ENCODE measurements at regions of chr13 and their contacts with region 1.

Region 1: DNA sequence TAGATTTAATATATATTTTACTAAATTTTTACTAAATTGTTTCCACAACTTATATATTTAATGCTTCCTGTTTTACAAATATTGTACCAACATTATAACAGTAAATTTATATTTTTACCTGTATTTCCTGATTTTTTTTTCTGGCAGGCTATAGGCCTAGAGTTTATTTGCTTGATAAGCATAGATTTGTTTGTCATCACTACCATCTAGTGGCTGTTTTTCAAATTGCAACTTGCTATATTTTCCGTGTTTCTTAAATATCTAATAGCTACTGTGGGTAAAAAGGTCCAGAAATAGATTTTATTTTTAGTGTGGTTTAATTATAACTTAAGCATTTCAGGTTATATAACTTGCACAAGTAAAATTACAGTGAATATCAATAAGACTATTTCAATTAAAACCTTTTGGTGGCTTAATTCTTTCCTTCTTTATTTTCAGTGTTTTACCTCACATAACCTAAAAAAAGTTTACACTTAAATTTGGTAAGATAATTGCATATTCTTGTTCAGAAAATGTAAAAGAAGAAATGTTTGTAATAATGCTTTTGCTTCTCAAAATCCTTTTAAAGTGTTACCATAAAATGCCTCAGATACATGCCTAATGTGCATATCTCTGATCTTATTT is 60.6 kb downstream of the NDFIP2 start:
- DNase-seq: no peak
- H3K4me3 ChIP-seq: no peak overlapping the region
- H3K27ac ChIP-seq: no peak overlapping the region
- H3K4me1 ChIP-seq: no peaks in the 10 kb centered on the region
- H3K27me3 ChIP-seq: no peaks in the 10 kb centered on the region
- CTCF ChIP-seq: peak; percentile 46 to 74 (median 71)
- EP300 ChIP-seq: no peak
- POLR2A ChIP-seq: no peak

Region 2: GRCh38 chr13:79196366-79196765 is 345.2 kb before region 1 on chr13:
- intact Hi-C with region 1: no loop called
- DNase-seq: no peak
- H3K4me3 ChIP-seq: no peak overlapping the region
- H3K27ac ChIP-seq: no peak overlapping the region
- H3K4me1 ChIP-seq: no peaks in the 10 kb centered on the region
- H3K27me3 ChIP-seq: no peaks in the 10 kb centered on the region
- CTCF ChIP-seq: no peak
- EP300 ChIP-seq: no peak
- POLR2A ChIP-seq: no peak

Region 3: DNA sequence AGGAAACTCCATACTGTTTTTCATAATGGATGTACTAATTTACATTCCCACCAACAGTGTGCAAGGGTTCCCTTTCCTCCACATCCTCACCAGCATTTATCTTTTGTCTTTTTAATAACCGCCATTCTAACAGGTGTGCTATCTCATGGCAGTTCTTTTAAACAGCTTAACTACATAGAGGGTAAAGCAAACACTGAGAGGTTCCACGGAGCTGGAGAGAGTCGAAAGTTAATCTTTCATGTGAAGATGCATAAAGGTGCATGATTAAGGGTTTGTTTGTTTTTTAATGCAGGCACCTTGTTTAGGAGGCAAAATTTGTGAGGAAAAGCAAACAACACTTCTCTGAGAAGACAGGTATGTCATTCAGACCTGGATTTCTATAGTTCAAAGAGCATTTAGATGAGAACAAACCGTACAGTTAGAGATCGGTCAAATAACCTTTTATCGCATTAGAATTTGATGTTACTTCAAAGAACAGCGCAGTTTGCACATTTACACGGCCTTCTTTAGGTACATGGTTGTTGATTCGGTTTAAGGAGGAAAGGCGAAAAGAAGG is 329.4 kb before region 1 on chr13:
- intact Hi-C with region 1: no loop called
- DNase-seq: no peak
- H3K4me3 ChIP-seq: no peak overlapping the region
- H3K27ac ChIP-seq: no peak overlapping the region
- H3K4me1 ChIP-seq: no peaks in the 10 kb centered on the region
- H3K27me3 ChIP-seq: no peaks in the 10 kb centered on the region
- CTCF ChIP-seq: no peak
- EP300 ChIP-seq: no peak
- POLR2A ChIP-seq: no peak

Region 4: DNA sequence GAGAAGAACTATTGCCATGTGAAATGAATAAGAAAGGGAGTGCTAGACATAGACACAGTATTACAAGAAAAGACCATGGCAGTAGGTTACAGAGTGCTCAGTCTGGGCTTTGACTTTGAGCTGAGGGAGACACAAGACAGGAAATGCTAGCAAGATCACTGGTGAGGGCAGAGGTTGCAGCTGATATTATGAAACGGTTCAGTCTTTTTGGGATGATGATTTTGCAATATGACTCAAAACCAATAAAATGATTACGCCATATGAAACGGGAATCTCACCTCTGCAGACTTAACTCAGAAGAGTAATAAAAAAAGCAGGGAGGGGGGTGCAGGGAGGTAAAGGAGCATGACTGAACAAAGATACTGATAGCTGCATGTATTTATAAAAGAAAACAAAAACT is 258.6 kb before region 1 on chr13:
- intact Hi-C with region 1: no loop called
- DNase-seq: no peak
- H3K4me3 ChIP-seq: no peak overlapping the region
- H3K27ac ChIP-seq: no peak overlapping the region
- H3K4me1 ChIP-seq: no peaks in the 10 kb centered on the region
- H3K27me3 ChIP-seq: no peaks in the 10 kb centered on the region
- CTCF ChIP-seq: no peak
- EP300 ChIP-seq: no peak
- POLR2A ChIP-seq: no peak

Region 5: GRCh38 chr13:79423801-79424642 is 117.5 kb before region 1 on chr13:
- intact Hi-C with region 1: loop called in 3 of 4 experiments (anchors 5 to 10 kb)
- DNase-seq: no peak
- H3K4me3 ChIP-seq: no peak overlapping the region
- H3K27ac ChIP-seq: no peak overlapping the region
- H3K4me1 ChIP-seq: no peaks in the 10 kb centered on the region
- H3K27me3 ChIP-seq: no peaks in the 10 kb centered on the region
- CTCF ChIP-seq: peak; percentile 37 to 59 (median 49)
- EP300 ChIP-seq: no peak
- POLR2A ChIP-seq: no peak

Region 6: GRCh38 chr13:79480954-79481684 is 60.4 kb before region 1 on chr13 and contains the start of gene NDFIP2:
- intact Hi-C with region 1: no loop called
- DNase-seq: peak; percentile 73 to 88 (median 78)
- H3K4me3 ChIP-seq: peak within 1 kb of the TSS; percentile 59
- H3K27ac ChIP-seq: peak within 1 kb of the TSS in 1 of 2 donors; percentile 4
- H3K4me1 ChIP-seq: no peaks in the 10 kb centered on the region
- H3K27me3 ChIP-seq: no peaks in the 10 kb centered on the region
- CTCF ChIP-seq: no peak
- EP300 ChIP-seq: no peak
- POLR2A ChIP-seq: peak; percentile 15
- total RNA-seq, gene NDFIP2: 8.7 to 20.4 (median 15.5) TPM

Measured in ovary (tissue), 10 donors.